Activated T-helper 2 cell treated with anti-CD3 and anti-CD28 coated beads, Interferon-gamma antibody, Interleukin-2, Interleukin-4, amounts not matched to agents 10 μg/mL and 5 μg/mL and 100 μg/mL, durations not matched to agents 14 hours and 24 hours and 36 hours (primary cell): ENCODE measurements at regions of chr4 and their contacts with region 1.

Region 1: DNA sequence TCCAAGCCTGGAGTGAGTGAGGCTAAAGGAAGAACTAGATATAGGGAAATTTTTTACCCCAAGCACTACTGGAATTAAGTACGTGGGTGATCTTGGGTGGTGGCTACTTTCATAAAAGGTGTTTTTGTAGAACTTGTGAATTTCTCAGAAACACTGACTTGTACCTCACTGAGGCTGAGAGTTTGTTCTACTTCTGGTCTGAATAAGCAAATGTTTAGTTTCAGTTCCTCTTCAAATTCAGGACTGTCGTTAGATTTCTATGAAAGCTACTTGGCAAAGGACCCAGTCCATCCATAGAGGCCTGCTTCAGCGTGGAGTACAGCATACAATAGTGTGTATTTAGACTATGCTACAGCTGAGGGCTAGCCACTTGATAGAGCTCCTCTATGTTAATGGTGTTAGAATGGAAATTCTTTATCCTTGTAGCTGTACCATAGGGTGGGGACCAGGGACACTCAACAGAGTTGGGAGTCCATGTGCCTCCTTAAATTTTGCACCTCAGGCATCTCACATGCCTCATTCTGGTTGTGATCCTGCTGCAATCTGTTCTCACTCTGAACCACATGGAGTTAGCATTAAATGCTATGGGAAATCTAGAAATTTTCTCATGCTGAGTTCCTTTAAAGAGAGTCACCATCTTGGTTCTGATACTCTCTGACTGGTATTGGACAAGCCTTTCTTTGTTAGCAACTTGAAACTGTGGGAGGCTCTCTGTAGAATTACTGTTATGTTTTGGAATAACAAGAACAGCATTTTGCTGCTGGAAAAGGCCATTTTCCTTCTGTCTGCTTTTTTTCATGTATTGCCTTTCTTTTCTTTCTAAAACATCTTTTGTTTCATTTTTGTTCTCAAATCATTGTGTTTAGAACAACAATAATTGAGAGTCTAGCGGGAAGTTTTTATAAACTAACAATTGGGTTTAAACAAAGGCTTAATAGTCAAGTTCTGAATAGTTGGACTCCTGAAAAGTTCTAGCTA is 86.8 kb downstream of the PDGFRA start:
- DNase-seq: no peak
- H3K4me3 Mint-ChIP-seq: no peak overlapping the region
- H3K27ac Mint-ChIP-seq: peak overlapping the region; percentile 26
- H3K4me1 Mint-ChIP-seq: peaks cover 34% of the 10 kb centered on the region
- H3K27me3 Mint-ChIP-seq: peaks cover 5% of the 10 kb centered on the region

Region 2: GRCh38 chr4:54233277-54233696 is 82.6 kb before region 1 on chr4:
- intact Hi-C with region 1: no loop called
- DNase-seq: peak; percentile 64
- H3K4me3 Mint-ChIP-seq: peak overlapping the region; percentile 41
- H3K27ac Mint-ChIP-seq: no peak overlapping the region
- H3K4me1 Mint-ChIP-seq: peaks cover 19% of the 10 kb centered on the region
- H3K27me3 Mint-ChIP-seq: peaks cover 55% of the 10 kb centered on the region

Region 3: GRCh38 chr4:54274795-54275665 is 40.8 kb before region 1 on chr4:
- intact Hi-C with region 1: loop called (anchors 1 kb)
- DNase-seq: no peak
- H3K4me3 Mint-ChIP-seq: no peak overlapping the region
- H3K27ac Mint-ChIP-seq: peak overlapping the region; percentile 47
- H3K4me1 Mint-ChIP-seq: peaks cover 32% of the 10 kb centered on the region
- H3K27me3 Mint-ChIP-seq: no peaks in the 10 kb centered on the region